ENCODE measurements at regions of chr10 and their contacts with region 1.

Region 1: GRCh38 chr10:98262571-98262970 is 5.4 kb downstream of the LOXL4 start:
- DNase-seq: no peak

Region 2: GRCh38 chr10:98167191-98167590 is 95.4 kb before region 1 on chr10:
- intact Hi-C with region 1: no loop called
- DNase-seq: no peak

Region 3: GRCh38 chr10:98309366-98310355 is 47.1 kb after region 1 on chr10:
- intact Hi-C with region 1: loop called (anchors 2 kb)
- DNase-seq: peak; percentile 81

Region 4: DNA sequence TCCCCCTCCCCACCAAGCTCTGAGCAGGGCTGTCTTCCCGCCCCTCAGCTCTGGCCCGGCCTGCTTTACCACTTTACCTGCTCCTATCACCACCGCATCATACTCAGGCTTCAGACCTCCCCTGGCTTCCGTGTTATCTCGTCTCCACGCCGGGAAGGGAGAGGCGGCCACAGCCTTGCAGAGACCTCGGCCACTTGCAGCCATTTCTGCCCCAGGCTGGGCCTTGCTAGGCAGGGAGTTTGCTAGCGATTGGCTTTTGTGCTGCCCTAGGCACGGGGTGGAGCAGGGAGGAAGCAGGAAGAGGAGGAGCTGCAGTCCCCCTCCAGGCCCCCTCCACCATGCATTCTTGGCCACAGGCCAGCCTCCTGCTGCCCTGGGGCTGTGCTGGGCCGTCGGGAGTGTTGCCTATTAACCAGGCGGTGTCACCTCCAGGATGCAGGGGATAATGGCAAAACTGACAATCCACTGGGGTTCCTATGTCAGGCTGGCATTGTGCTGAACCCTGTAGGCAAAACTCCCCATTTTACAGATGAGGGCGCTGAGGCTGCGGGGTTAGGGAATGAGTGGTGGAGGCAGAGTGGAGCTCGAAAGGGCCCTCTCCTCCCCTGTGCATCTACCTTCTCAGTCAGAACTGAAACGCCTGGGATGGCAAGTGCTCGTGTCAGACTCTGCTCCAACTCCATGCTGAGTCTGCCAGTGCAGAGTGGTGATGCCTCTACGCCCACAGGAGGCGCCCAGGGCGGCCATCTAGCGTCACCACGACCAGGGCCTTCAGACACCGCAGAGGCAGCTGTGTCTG is 152.6 kb after region 1 on chr10 and contains the start of gene PYROXD2:
- intact Hi-C with region 1: loop called (anchors 10 kb)
- DNase-seq: peak; percentile 95
- total RNA-seq, gene PYROXD2: 11.7 TPM

Region 5: GRCh38 chr10:99248824-99249223 is 986.3 kb after region 1 on chr10:
- intact Hi-C with region 1: loop called (anchors 10 kb)
- DNase-seq: no peak

Measured in cardiac septum (tissue), 1 donor.